Activated CD8-positive, alpha-beta memory T cell treated with anti-CD3 and anti-CD28 coated beads, Interleukin-2, amount 10 ng/mL, durations not matched to agents 7 days and 5 days (primary cell): ENCODE measurements at regions of chr19 and their contacts with region 1.

Region 1: GRCh38 chr19:4638828-4639530 is at the start of gene TNFAIP8L1:
- DNase-seq: peak; percentile 99
- ATAC-seq: peak; percentile 94
- H3K4me3 Mint-ChIP-seq: peak within 1 kb of the TSS; percentile 93
- H3K27ac Mint-ChIP-seq: peak within 1 kb of the TSS; percentile 93
- H3K4me1 Mint-ChIP-seq: peaks cover 38% of the 10 kb centered on the region
- H3K27me3 Mint-ChIP-seq: no peaks in the 10 kb centered on the region
- total RNA-seq, gene TNFAIP8L1: 15.7 to 20.1 TPM

Region 2: GRCh38 chr19:4547303-4548237 is 91.4 kb before region 1 on chr19:
- CTCF ChIA-PET with region 1: interaction called, 12 read pairs
- DNase-seq: peak; percentile 54
- ATAC-seq: peak; percentile 23
- H3K4me3 Mint-ChIP-seq: no peak overlapping the region
- H3K27ac Mint-ChIP-seq: no peak overlapping the region
- H3K4me1 Mint-ChIP-seq: peaks cover 1% of the 10 kb centered on the region
- H3K27me3 Mint-ChIP-seq: no peaks in the 10 kb centered on the region

Region 3: GRCh38 chr19:4567584-4568071 is 71.4 kb before region 1 on chr19:
- CTCF ChIA-PET with region 1: interaction called, 74 read pairs
- DNase-seq: peak; percentile 75
- ATAC-seq: peak; percentile 42
- H3K4me3 Mint-ChIP-seq: no peak overlapping the region
- H3K27ac Mint-ChIP-seq: no peak overlapping the region
- H3K4me1 Mint-ChIP-seq: no peaks in the 10 kb centered on the region
- H3K27me3 Mint-ChIP-seq: no peaks in the 10 kb centered on the region

Region 4: GRCh38 chr19:4593409-4593851 is 45.5 kb before region 1 on chr19:
- CTCF ChIA-PET with region 1: interaction called, 11 read pairs
- DNase-seq: no peak
- ATAC-seq: no peak
- H3K4me3 Mint-ChIP-seq: no peak overlapping the region
- H3K27ac Mint-ChIP-seq: no peak overlapping the region
- H3K4me1 Mint-ChIP-seq: no peaks in the 10 kb centered on the region
- H3K27me3 Mint-ChIP-seq: peaks cover 36% of the 10 kb centered on the region